ENCODE measurements at regions of chr12 and their contacts with region 1.

Region 1: GRCh38 chr12:45990468-45991283 is at the start of gene SCAF11:
- DNase-seq: peak; percentile 100
- H3K4me3 ChIP-seq: peak within 1 kb of the TSS; percentile 93 to 94
- H3K4me3 Mint-ChIP-seq: peak within 1 kb of the TSS; percentile 89 to 99 (median 96)
- H3K27ac ChIP-seq: peak within 1 kb of the TSS; percentile 99
- H3K27ac Mint-ChIP-seq: peak within 1 kb of the TSS; percentile 96 to 100 (median 100)
- H3K4me1 ChIP-seq: peaks cover 37% of the 10 kb centered on the region
- H3K4me1 Mint-ChIP-seq: peaks cover 36 to 59% (median 41%) of the 10 kb centered on the region in 4 donors
- H3K27me3 ChIP-seq: no peaks in the 10 kb centered on the region
- H3K27me3 Mint-ChIP-seq: peaks cover 0 to 4% of the 10 kb centered on the region in 2 donors
- total RNA-seq, gene SCAF11: 212 to 236 TPM

Region 2: GRCh38 chr12:45575823-45576475 is 414.7 kb before region 1 on chr12:
- CTCF ChIA-PET with region 1: no interaction called
- POLR2A ChIA-PET with region 1: no interaction called
- intact Hi-C with region 1: no loop called
- DNase-seq: no peak
- H3K4me3 ChIP-seq: no peak overlapping the region
- H3K4me3 Mint-ChIP-seq: no peak overlapping the region
- H3K27ac ChIP-seq: no peak overlapping the region
- H3K27ac Mint-ChIP-seq: no peak overlapping the region
- H3K4me1 ChIP-seq: no peaks in the 10 kb centered on the region
- H3K4me1 Mint-ChIP-seq: peaks cover 0 to 2% (median 0%) of the 10 kb centered on the region in 4 donors
- H3K27me3 ChIP-seq: no peaks in the 10 kb centered on the region
- H3K27me3 Mint-ChIP-seq: peaks cover 0 to 2% of the 10 kb centered on the region in 2 donors

Region 3: DNA sequence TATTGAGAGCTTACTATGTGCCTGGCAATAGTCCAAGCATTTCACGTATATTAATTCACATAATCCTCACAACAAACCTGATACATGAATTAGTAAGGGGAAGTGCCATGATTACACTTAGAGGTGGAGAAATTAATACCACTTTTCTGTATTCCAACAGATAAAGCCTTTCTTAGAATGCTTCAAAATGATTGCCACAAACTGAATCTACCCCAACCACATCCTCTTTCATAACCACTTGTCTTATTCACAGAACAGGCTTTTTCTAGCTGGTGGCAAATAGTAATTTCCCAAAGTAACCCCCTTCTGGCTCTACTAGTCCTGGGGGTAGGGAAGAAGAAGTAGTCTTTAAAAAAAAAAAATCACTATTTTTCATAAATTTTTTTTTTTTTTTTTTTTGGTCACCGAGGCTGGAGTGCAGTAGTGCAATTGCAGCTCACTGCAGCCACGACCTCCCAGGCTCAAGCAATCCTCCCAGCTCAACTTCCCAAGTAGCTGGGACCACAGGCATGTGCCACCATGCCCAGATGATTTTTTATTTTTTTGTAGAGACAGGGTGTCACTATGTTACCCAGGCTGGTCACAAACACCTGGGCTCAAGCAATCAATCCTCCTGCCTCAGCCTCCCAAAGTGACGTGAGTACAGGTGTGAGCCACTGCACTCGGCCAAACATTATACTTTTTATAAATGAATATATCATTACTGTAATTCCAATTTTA is 320.2 kb before region 1 on chr12:
- CTCF ChIA-PET with region 1: no interaction called
- POLR2A ChIA-PET with region 1: no interaction called
- intact Hi-C with region 1: loop called (anchors 10 kb)
- DNase-seq: peak; percentile 30 to 61 (median 44)
- H3K4me3 ChIP-seq: peak overlapping the region in 1 of 2 donors; percentile 2
- H3K4me3 Mint-ChIP-seq: peak overlapping the region in 6 of 8 donors; percentile 15 to 62 (median 42)
- H3K27ac ChIP-seq: no peak overlapping the region
- H3K27ac Mint-ChIP-seq: peak overlapping the region in 2 of 7 donors; percentile 17 to 48
- H3K4me1 ChIP-seq: peaks cover 32% of the 10 kb centered on the region
- H3K4me1 Mint-ChIP-seq: peaks cover 21 to 39% (median 27%) of the 10 kb centered on the region in 4 donors
- H3K27me3 ChIP-seq: no peaks in the 10 kb centered on the region
- H3K27me3 Mint-ChIP-seq: no peaks in the 10 kb centered on the region

Region 4: GRCh38 chr12:45866299-45866698 is 124.4 kb before region 1 on chr12:
- CTCF ChIA-PET with region 1: no interaction called
- POLR2A ChIA-PET with region 1: no interaction called
- intact Hi-C with region 1: no loop called
- DNase-seq: no peak
- H3K4me3 ChIP-seq: no peak overlapping the region
- H3K4me3 Mint-ChIP-seq: no peak overlapping the region
- H3K27ac ChIP-seq: no peak overlapping the region
- H3K27ac Mint-ChIP-seq: peak overlapping the region in 1 of 7 donors; percentile 4
- H3K4me1 ChIP-seq: no peaks in the 10 kb centered on the region
- H3K4me1 Mint-ChIP-seq: peaks cover 8 to 21% (median 16%) of the 10 kb centered on the region in 4 donors
- H3K27me3 ChIP-seq: no peaks in the 10 kb centered on the region
- H3K27me3 Mint-ChIP-seq: no peaks in the 10 kb centered on the region

Region 5: DNA sequence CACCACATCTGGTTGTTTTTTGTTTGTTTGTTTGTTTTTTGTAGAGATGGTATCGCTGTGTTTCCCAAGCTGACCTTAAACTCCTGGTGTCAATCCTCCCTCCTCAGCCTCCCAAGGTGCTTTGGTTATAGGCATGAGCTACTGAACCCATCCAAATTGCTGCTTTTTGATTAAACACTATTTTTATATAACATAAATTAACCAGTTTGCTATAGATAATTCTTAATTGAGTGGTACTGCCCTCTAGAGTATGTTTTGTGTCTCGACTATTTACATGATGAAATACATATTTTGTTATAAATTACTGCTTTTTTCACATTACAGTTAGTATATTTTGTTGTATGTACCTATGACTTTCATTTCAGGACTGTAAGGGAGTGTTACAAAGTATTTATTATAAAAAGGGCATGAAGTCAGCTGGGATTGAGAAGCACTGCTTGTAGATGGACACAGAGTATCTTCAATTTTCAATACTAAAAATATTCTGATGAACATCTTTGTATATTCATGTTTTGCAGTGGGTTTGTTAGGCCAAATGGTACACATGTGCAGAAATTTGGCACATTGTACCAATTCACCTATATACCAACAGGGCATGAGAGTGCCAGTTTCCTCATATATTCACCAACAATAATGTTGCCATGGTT is 14.6 kb after region 1 on chr12:
- CTCF ChIA-PET with region 1: interaction called, 13 read pairs
- POLR2A ChIA-PET with region 1: interaction called, 3 read pairs
- intact Hi-C with region 1: loop called (anchors 1 kb)
- DNase-seq: peak in 1 of 5 donors; percentile 23
- H3K4me3 ChIP-seq: no peak overlapping the region
- H3K4me3 Mint-ChIP-seq: no peak overlapping the region
- H3K27ac ChIP-seq: no peak overlapping the region
- H3K27ac Mint-ChIP-seq: peak overlapping the region in 4 of 7 donors; percentile 2 to 72 (median 60)
- H3K4me1 ChIP-seq: no peaks in the 10 kb centered on the region
- H3K4me1 Mint-ChIP-seq: no peaks in the 10 kb centered on the region
- H3K27me3 ChIP-seq: no peaks in the 10 kb centered on the region
- H3K27me3 Mint-ChIP-seq: no peaks in the 10 kb centered on the region

Region 6: GRCh38 chr12:46064548-46064947 is 73.9 kb after region 1 on chr12:
- CTCF ChIA-PET with region 1: no interaction called
- POLR2A ChIA-PET with region 1: no interaction called
- intact Hi-C with region 1: no loop called
- DNase-seq: no peak
- H3K4me3 ChIP-seq: no peak overlapping the region
- H3K4me3 Mint-ChIP-seq: no peak overlapping the region
- H3K27ac ChIP-seq: no peak overlapping the region
- H3K27ac Mint-ChIP-seq: no peak overlapping the region
- H3K4me1 ChIP-seq: no peaks in the 10 kb centered on the region
- H3K4me1 Mint-ChIP-seq: peaks cover 0 to 4% (median 0%) of the 10 kb centered on the region in 4 donors
- H3K27me3 ChIP-seq: no peaks in the 10 kb centered on the region
- H3K27me3 Mint-ChIP-seq: peaks cover 1 to 7% of the 10 kb centered on the region in 2 donors

Region 7: DNA sequence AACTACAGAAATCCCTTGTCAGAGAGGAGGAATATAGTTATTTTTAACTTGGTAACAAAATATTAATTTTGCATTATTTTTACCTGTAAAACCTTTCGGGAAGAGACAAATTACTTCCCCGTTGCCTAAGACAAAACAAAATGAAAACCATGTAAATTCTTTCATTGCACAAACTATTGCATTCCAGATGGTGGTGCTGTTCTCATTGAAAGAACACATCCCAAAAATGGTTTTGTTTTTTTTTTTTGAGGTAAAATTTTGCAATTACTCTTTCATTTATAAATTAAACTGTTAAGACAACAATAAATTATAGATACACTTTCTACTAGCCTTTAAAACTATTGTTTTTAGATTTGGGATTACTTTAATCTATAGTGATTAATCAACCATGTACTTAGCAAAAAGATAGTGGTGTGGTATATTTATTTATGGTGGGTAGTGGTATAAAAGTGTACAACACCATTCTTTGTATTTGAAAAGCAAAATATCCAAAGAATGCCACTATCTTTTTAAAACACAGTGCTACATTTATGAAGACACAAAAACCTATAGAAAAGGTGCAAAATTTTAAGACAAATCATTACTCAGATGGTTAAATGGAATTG is 162.7 kb after region 1 on chr12:
- CTCF ChIA-PET with region 1: no interaction called
- POLR2A ChIA-PET with region 1: no interaction called
- intact Hi-C with region 1: loop called (anchors 1 kb)
- DNase-seq: peak in 4 of 5 donors; percentile 38 to 50 (median 45)
- H3K4me3 ChIP-seq: no peak overlapping the region
- H3K4me3 Mint-ChIP-seq: no peak overlapping the region
- H3K27ac ChIP-seq: no peak overlapping the region
- H3K27ac Mint-ChIP-seq: no peak overlapping the region
- H3K4me1 ChIP-seq: peaks cover 11% of the 10 kb centered on the region
- H3K4me1 Mint-ChIP-seq: peaks cover 0 to 11% (median 9%) of the 10 kb centered on the region in 4 donors
- H3K27me3 ChIP-seq: no peaks in the 10 kb centered on the region
- H3K27me3 Mint-ChIP-seq: peaks cover under 1 to 4% of the 10 kb centered on the region in 2 donors

Region 8: GRCh38 chr12:46198913-46199312 is 208.2 kb after region 1 on chr12:
- CTCF ChIA-PET with region 1: no interaction called
- POLR2A ChIA-PET with region 1: no interaction called
- intact Hi-C with region 1: no loop called
- DNase-seq: no peak
- H3K4me3 ChIP-seq: no peak overlapping the region
- H3K4me3 Mint-ChIP-seq: peak overlapping the region in 1 of 8 donors; percentile 22
- H3K27ac ChIP-seq: no peak overlapping the region
- H3K27ac Mint-ChIP-seq: peak overlapping the region in 5 of 7 donors; percentile 25 to 73 (median 62)
- H3K4me1 ChIP-seq: no peaks in the 10 kb centered on the region
- H3K4me1 Mint-ChIP-seq: peaks cover 5 to 14% (median 7%) of the 10 kb centered on the region in 4 donors
- H3K27me3 ChIP-seq: no peaks in the 10 kb centered on the region
- H3K27me3 Mint-ChIP-seq: no peaks in the 10 kb centered on the region

Region 9: GRCh38 chr12:46303039-46303666 is 312.5 kb after region 1 on chr12:
- CTCF ChIA-PET with region 1: interaction called, 4 read pairs
- POLR2A ChIA-PET with region 1: interaction called, 3 read pairs
- intact Hi-C with region 1: loop called (anchors 1 kb)
- DNase-seq: peak; percentile 52 to 69 (median 62)
- H3K4me3 ChIP-seq: no peak overlapping the region
- H3K4me3 Mint-ChIP-seq: no peak overlapping the region
- H3K27ac ChIP-seq: no peak overlapping the region
- H3K27ac Mint-ChIP-seq: no peak overlapping the region
- H3K4me1 ChIP-seq: no peaks in the 10 kb centered on the region
- H3K4me1 Mint-ChIP-seq: peaks cover 3 to 4% (median 4%) of the 10 kb centered on the region in 4 donors
- H3K27me3 ChIP-seq: no peaks in the 10 kb centered on the region
- H3K27me3 Mint-ChIP-seq: no peaks in the 10 kb centered on the region

Region 10: GRCh38 chr12:46661110-46661845 is 670.6 kb after region 1 on chr12:
- CTCF ChIA-PET with region 1: no interaction called
- POLR2A ChIA-PET with region 1: no interaction called
- intact Hi-C with region 1: loop called (anchors 2 kb)
- DNase-seq: peak in 4 of 5 donors; percentile 48 to 55 (median 52)
- H3K4me3 ChIP-seq: no peak overlapping the region
- H3K4me3 Mint-ChIP-seq: no peak overlapping the region
- H3K27ac ChIP-seq: no peak overlapping the region
- H3K27ac Mint-ChIP-seq: peak overlapping the region in 1 of 7 donors; percentile 43
- H3K4me1 ChIP-seq: peaks cover 14% of the 10 kb centered on the region
- H3K4me1 Mint-ChIP-seq: peaks cover 16 to 27% (median 22%) of the 10 kb centered on the region in 4 donors
- H3K27me3 ChIP-seq: no peaks in the 10 kb centered on the region
- H3K27me3 Mint-ChIP-seq: no peaks in the 10 kb centered on the region

Measured in CD4-positive, alpha-beta memory T cell (primary cell).